Left lung (tissue), 14 donors: ENCODE measurements at regions of chr10 and their contacts with region 1.

Region 1: GRCh38 chr10:28241741-28242399 is 61.0 kb downstream of the MPP7 start:
- DNase-seq: peak in 2 of 4 donors; percentile 60 to 72
- ATAC-seq: peak; percentile 96
- H3K4me3 ChIP-seq: no peak overlapping the region
- H3K27ac ChIP-seq: peak overlapping the region in 1 of 2 donors; percentile 55
- H3K4me1 ChIP-seq: peaks cover 0 to 21% of the 10 kb centered on the region in 2 donors
- H3K27me3 ChIP-seq: no peaks in the 10 kb centered on the region
- CTCF ChIP-seq: peak; percentile 69 to 94

Region 2: DNA sequence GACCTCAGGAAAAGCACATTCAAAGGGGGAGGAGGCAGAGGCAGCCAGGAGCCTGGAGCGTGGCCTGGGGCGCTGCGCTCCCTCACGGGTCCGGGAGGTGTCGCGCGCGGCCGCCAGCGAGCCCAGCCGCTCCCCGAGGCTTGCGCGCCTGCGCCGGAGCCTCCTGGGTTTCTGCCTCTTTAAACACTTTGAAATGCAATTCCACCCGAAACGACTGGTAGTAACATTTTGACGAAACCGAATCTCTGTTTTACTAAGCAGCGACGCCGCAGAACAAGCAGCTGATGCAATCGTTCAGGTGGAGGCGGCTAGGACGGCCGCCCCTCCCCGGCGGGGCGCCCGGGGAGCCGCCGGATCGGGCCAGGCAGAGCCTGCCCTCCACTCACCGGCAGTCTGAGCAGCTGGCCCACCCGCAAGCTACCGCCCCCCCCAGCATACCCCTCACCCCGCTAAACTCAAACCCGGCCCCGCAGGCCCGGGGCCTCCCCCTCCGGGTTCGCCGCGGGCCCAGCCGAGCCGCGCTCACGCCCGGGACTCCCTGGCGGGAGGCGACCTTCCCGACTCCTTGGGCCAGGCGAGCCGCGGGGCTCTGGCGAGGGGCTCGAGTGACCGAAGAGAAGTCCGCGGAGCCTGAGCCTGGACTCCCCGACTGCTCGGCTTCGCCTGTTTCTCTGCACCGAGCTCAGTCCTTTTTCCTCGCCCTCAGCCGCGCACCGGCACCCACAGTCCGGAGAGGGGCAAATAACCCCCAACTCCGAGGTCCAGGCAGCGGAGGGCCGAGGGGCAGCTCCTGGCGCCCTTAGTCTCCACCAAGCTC is 499.5 kb before region 1 on chr10:
- intact Hi-C with region 1: loop called in 1 of 2 experiments (anchors 10 kb)
- DNase-seq: peak; percentile 74 to 94 (median 84)
- ATAC-seq: peak; percentile 94
- H3K4me3 ChIP-seq: peak overlapping the region; percentile 52 to 61
- H3K27ac ChIP-seq: peak overlapping the region; percentile 62 to 71
- H3K4me1 ChIP-seq: peaks cover 35 to 58% of the 10 kb centered on the region in 2 donors
- H3K27me3 ChIP-seq: peaks cover 81 to 86% of the 10 kb centered on the region in 2 donors
- CTCF ChIP-seq: peak; percentile 77 to 80

Region 3: DNA sequence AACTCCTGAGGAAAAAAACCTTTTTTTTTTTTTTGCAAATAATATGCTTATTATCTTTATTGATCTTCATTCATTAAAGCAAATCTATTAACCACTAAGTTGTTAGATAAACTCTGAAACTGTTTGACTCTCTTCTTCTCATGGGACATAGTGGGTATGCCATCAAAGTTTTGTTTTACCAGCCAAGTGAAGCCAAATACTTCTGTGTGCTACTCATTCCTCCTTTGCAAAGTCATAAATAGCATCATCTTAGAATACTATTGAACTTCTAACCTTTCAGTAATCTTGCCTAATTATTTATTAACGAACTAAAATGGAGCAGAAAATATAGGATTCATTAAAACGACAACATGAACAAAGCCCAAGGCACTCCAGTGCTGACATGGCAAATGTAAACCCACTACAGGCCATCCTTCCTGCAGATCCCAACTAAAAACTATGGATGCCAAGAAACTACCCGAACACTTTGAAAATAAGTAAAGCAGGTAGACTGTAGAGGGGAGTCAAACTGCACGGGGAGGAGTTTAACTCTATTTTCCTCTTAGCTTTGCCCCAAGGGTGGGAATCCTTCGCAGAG is 181.8 kb before region 1 on chr10:
- intact Hi-C with region 1: no loop called
- DNase-seq: no peak
- ATAC-seq: no peak
- H3K4me3 ChIP-seq: no peak overlapping the region
- H3K27ac ChIP-seq: no peak overlapping the region
- H3K4me1 ChIP-seq: no peaks in the 10 kb centered on the region
- H3K27me3 ChIP-seq: no peaks in the 10 kb centered on the region
- CTCF ChIP-seq: no peak